H1 (cell line): ENCODE measurements at regions of chr2 and their contacts with region 1.

Region 1: DNA sequence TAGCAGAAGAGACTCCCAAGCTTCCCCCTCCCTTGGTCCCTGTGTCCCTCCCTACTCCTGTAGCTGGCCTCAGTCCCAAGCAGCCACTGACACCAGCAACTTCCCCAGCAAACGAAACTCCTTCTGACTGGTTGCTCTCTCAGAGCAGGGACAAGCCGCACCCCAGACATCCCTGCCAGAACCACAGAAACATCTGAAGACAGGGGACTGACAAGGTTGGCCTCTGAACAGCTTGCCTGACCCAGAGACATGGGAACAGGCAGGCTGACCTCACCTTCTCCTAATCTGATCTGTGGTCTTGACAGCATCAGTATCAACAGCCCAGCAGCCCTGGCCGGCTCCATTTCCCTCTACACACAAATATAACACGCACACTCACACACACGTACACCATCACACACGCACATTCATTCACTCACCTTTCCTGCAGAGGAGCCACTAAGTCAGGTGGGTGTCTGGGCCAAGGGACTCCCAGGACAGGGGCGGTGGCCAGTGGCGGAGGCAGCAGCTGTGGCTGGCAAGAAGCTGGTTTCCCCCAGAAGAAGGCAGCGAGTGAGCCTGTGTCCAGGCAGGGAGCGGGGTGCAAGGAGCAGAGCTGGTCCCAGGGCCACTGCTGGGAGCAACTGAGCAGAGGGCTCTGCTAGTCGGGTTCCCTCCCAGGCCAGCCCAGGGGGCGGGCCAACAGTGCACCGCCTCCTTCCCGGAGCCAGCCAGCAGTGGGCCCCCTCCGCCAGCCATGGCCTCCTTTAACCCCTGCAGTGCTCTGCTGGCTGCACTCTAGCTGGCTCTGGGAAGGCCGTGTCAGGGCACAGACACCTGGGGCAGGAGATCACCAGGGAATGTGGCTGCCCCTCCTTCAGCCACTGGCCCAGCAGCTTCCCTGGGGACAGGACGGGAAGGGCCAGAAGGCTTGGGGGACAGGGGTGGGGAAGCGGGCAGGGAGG is 59.1 kb downstream of the TNS1 start:
- DNase-seq: peak in 1 of 2 experiments; percentile 83
- H3K4me3 ChIP-seq: 0 out of 8 replicates have a peak overlapping the region, but pooled peaks of 1 of the 4 experiments have one; percentile 10
- H3K27ac ChIP-seq: no peak overlapping the region
- H3K4me1 ChIP-seq: peaks cover 3 to 16% (median 9%) of the 10 kb centered on the region in 4 experiments
- H3K27me3 ChIP-seq: no peaks in the 10 kb centered on the region
- CTCF ChIP-seq: peak; percentile 27 to 43 (median 34); a peak in 3 of 4 replicates
- EP300 ChIP-seq: no peak
- POLR2A ChIP-seq: peak in 1 of 2 experiments; percentile 26; a peak in 1 of 3 replicates
- RAD21 ChIP-seq: peak; percentile 43 to 61; a peak in 3 of 4 replicates

Region 2: DNA sequence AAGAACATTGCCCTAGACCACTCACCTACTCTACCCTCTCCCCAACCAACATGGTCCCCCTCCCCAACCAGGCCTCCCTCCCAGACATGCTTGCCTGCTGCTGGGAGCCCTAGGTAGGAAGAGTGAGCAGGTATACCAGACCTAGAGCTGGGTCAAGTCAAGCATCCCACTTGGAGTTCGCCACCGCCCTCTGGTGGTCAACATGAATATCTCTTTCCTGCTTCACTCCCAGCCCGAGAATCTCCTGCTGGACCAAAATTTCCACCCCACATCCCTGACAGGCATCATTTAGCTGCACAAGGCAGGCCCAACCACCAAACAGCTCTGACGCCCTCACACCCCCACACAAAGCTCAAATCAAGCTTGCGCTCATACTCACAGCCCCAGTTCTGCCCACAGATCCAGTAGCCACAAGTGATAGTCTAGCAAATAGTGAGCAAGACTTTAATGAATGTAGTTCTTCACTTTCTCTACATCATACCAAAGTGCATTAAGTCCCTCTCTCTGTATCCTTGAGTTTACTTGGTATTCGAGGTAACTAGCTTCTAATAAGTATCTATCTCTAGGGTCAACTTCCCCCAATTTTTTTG is 56.9 kb before region 1 on chr2:
- CTCF ChIA-PET with region 1: interaction called, 10 read pairs
- POLR2A ChIA-PET with region 1: interaction called, 3 read pairs
- DNase-seq: peak; percentile 47 to 92
- H3K4me3 ChIP-seq: no peak overlapping the region
- H3K27ac ChIP-seq: no peak overlapping the region
- H3K4me1 ChIP-seq: no peaks in the 10 kb centered on the region
- H3K27me3 ChIP-seq: no peaks in the 10 kb centered on the region
- CTCF ChIP-seq: peak; percentile 88 to 95 (median 94)
- EP300 ChIP-seq: no peak
- POLR2A ChIP-seq: no peak
- RAD21 ChIP-seq: peak; percentile 90

Region 3: GRCh38 chr2:217918308-217919024 is 25.3 kb before region 1 on chr2:
- CTCF ChIA-PET with region 1: interaction called, 14 read pairs
- POLR2A ChIA-PET with region 1: no interaction called
- DNase-seq: no peak
- H3K4me3 ChIP-seq: no peak overlapping the region
- H3K27ac ChIP-seq: no peak overlapping the region
- H3K4me1 ChIP-seq: peaks cover 9 to 48% (median 33%) of the 10 kb centered on the region in 4 experiments
- H3K27me3 ChIP-seq: peaks cover 0 to 4% (median 0%) of the 10 kb centered on the region in 4 experiments; a peak in 3 of 7 replicates
- CTCF ChIP-seq: peak; percentile 53 to 63 (median 55)
- EP300 ChIP-seq: no peak
- POLR2A ChIP-seq: no peak
- RAD21 ChIP-seq: peak in 1 of 2 experiments; percentile 45; a peak in 3 of 4 replicates

Region 4: DNA sequence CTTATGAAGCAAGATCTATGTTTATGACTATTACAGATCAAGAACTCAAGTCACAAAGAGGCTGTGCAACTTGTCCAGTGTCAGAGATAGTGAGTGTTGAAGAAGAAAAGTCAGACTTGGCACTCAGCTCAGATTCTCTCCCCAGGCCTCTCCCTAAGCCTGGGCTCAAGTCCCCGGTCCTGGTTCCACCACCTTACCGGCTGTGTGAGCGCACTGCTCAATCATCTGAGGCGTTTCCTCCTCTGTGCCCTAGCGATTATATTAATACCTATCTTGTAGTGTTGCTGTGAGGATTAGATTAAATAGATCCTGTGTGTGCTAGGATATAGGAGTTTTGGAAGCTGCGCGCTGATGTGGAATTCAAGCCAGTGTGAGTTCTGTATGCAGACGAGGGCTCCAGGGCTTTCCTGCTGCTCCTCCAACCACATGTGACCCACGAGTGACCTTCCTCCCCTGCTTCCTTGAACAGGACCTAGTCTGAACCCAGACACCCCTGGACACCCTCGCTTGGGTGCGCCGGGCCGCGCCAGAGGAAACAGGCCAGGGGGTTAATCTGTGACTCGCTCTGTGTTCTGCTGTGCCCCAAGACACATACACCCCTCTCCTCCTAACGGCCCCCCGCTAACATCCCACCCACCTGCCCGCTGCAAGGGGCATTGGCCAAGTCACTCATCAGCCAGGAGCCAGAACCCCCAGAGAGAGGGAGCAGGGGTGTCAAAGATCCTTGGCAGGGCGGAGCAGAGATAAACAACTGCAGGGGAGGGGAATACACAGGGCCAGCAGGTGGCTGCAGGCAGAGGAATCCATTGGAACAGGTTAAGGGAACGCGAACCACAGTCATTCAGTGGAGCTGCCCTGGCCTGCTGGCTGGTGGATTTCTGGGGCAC is 20.8 kb after region 1 on chr2:
- CTCF ChIA-PET with region 1: interaction called, 52 read pairs
- POLR2A ChIA-PET with region 1: interaction called, 9 read pairs
- DNase-seq: no peak
- H3K4me3 ChIP-seq: no peak overlapping the region
- H3K27ac ChIP-seq: no peak overlapping the region; the same call in 1 of the 2 replicates
- H3K4me1 ChIP-seq: peaks cover 0 to 13% (median 8%) of the 10 kb centered on the region in 4 experiments; a peak in 6 of 7 replicates
- H3K27me3 ChIP-seq: no peaks in the 10 kb centered on the region
- CTCF ChIP-seq: no peak
- EP300 ChIP-seq: no peak
- POLR2A ChIP-seq: no peak
- RAD21 ChIP-seq: no peak; a peak in 1 of 4 replicates

Region 5: GRCh38 chr2:218301176-218301819 is 357.6 kb after region 1 on chr2:
- CTCF ChIA-PET with region 1: no interaction called
- POLR2A ChIA-PET with region 1: no interaction called
- DNase-seq: peak; percentile 76 to 93
- H3K4me3 ChIP-seq: no peak overlapping the region
- H3K27ac ChIP-seq: no peak overlapping the region
- H3K4me1 ChIP-seq: no peaks in the 10 kb centered on the region
- H3K27me3 ChIP-seq: no peaks in the 10 kb centered on the region
- CTCF ChIP-seq: peak; percentile 78 to 96 (median 93)
- EP300 ChIP-seq: no peak
- POLR2A ChIP-seq: no peak
- RAD21 ChIP-seq: peak; percentile 96 to 98